Activated naive CD8-positive, alpha-beta T cell treated with anti-CD3 and anti-CD28 coated beads, Interleukin-2, amount 10 ng/mL, durations not matched to agents 7 days and 5 days (primary cell): ENCODE measurements at regions of chr14 and their contacts with region 1.

Region 1: GRCh38 chr14:100192672-100193416 is 33.4 kb upstream of the DEGS2 start:
- DNase-seq: peak; percentile 99
- ATAC-seq: peak; percentile 100
- H3K4me3 Mint-ChIP-seq: peak overlapping the region; percentile 75
- H3K27ac Mint-ChIP-seq: peak overlapping the region; percentile 93
- H3K4me1 Mint-ChIP-seq: peaks cover 8% of the 10 kb centered on the region
- H3K27me3 Mint-ChIP-seq: no peaks in the 10 kb centered on the region

Region 2: DNA sequence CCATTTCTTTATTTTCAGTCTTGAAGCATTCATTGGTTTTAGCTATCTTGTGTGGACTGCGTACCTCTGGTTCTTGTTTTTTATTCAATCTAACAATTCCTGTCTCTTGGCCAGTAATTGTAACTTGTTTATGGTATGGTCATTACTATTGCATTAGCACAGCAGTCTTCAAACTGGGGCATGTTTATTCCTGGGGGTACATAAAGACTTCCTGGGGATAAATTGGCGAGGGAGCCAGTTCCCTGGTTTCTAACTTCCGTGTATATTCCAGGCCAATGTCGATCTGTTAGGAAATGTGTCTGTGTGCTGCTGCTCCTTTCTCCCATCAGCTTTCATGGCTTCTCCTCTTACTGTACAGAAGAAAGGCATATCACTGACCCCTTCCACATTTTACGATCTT is 141.3 kb before region 1 on chr14:
- POLR2A ChIA-PET with region 1: no interaction called
- DNase-seq: no peak
- ATAC-seq: no peak
- H3K4me3 Mint-ChIP-seq: no peak overlapping the region
- H3K27ac Mint-ChIP-seq: peak overlapping the region; percentile 26
- H3K4me1 Mint-ChIP-seq: peaks cover 37% of the 10 kb centered on the region
- H3K27me3 Mint-ChIP-seq: no peaks in the 10 kb centered on the region

Region 3: DNA sequence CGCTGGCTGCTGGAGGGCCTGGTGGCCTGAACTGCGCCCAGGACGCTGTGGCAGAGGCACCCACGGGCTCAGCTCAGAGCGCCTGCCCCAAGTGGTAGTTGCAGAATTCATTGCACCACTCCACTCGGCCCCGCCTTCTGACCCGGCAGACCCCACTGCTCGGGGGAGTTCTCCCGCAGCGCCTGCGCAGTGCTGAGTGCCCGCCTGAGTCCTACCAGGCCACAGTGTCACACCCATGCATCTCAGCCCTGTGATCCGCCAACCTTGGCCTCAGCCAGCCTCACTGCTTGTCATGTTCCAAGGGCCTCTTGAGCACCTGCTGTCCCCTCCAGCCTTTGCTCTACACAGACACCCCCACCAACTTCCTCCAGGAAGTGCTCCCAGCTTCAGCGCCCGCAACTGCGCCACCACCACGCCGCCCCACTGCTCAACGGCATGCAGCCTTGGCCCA is 45.6 kb before region 1 on chr14:
- POLR2A ChIA-PET with region 1: interaction called, 11 read pairs
- DNase-seq: peak; percentile 78
- ATAC-seq: peak; percentile 65
- H3K4me3 Mint-ChIP-seq: peak overlapping the region; percentile 4
- H3K27ac Mint-ChIP-seq: peak overlapping the region; percentile 77
- H3K4me1 Mint-ChIP-seq: peaks cover 22% of the 10 kb centered on the region
- H3K27me3 Mint-ChIP-seq: no peaks in the 10 kb centered on the region

Region 4: DNA sequence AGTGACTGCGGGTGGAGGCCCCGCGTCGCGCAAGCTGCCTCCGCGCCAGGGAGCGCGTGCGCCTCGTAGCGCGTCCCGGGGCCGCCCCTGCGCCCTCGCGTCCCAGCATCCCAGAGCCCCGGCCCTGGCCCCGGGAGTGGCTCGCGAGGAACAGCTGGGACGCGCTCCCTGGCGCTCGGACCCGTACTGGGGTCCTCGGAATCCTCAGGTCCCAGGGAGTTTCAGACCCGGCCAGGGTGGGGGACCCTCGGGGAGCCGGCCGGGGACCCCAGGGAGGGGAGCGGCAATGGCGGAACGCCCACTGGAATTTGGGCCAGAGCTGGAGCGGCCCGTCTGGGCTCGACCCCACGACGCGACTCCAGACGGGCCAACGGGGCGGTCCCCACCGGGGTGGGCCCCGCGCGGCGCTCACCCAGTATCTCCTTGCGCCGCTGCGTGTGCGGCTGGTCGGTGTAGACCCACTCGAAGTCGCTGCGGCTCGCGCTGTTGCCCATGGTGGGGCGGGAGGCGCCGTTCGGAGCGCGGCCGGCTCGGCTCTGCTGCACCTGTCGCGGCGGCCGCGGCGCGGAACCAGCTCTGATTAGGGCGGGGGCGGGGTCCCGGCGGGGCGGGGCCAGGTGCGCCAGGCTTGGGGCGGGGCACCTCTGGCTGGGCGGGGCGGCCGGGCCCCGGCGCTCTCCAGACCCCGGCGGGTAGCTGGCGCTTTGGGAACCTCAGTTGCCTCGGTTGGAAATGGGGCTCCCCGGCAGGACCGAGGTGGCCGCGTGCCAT is 33.6 kb before region 1 on chr14 and contains the start of gene DEGS2:
- POLR2A ChIA-PET with region 1: no interaction called
- DNase-seq: peak; percentile 73
- ATAC-seq: peak; percentile 78
- H3K4me3 Mint-ChIP-seq: peak within 1 kb of the TSS; percentile 73
- H3K27ac Mint-ChIP-seq: no peak within 1 kb of the TSS
- H3K4me1 Mint-ChIP-seq: peaks cover 2% of the 10 kb centered on the region
- H3K27me3 Mint-ChIP-seq: peaks cover 33% of the 10 kb centered on the region
- total RNA-seq, gene DEGS2: 0.14 to 0.28 TPM

Region 5: GRCh38 chr14:100173353-100173752 is 19.5 kb before region 1 on chr14:
- POLR2A ChIA-PET with region 1: no interaction called
- DNase-seq: no peak
- ATAC-seq: no peak
- H3K4me3 Mint-ChIP-seq: no peak overlapping the region
- H3K27ac Mint-ChIP-seq: no peak overlapping the region
- H3K4me1 Mint-ChIP-seq: peaks cover 1% of the 10 kb centered on the region
- H3K27me3 Mint-ChIP-seq: peaks cover 14% of the 10 kb centered on the region

Region 6: DNA sequence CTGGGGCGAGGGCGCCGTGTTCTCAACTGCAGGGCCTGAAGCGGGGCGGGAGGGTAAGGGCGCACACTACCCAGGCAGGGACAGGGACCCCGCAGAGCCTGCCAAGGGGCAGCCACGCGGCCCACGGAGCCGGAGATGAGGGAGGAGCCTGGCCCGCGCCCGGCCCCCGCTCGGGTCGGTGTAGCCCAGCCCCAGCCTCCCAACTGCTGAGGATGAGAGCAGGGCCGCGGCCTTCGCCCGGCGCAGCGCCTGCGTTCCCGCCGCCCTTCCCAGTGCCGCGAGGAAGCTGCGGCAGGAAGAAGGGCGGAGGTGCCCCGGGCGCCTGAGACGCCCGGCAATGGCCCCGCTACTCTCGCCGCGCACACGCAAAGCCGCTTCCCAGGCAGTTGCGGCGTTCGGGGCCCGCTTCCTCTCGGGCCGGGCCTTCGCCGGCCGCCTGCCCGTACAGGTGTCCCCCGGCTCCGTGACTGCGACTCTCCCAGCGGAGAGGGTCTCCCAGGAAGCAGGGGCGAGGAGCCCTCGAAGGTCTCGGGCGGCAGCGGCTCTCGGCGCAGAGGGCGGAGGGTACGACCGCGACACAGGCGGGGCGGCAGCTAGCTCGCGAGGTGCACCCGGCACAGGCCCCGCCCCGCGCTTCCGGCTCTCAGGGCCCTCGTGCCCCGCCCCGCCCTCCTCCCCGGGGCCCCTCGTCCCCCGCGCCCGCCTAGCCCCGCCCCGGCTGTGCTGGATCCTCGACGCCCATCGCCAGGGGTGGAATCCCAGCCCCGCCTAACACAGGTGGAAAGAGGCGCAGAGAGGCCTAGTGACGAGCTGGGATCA is 21.3 kb after region 1 on chr14:
- POLR2A ChIA-PET with region 1: interaction called, 12 read pairs
- DNase-seq: peak; percentile 97
- ATAC-seq: peak; percentile 94
- H3K4me3 Mint-ChIP-seq: peak overlapping the region; percentile 85
- H3K27ac Mint-ChIP-seq: peak overlapping the region; percentile 94
- H3K4me1 Mint-ChIP-seq: peaks cover 28% of the 10 kb centered on the region
- H3K27me3 Mint-ChIP-seq: no peaks in the 10 kb centered on the region

Region 7: GRCh38 chr14:100221533-100222223 is 28.8 kb after region 1 on chr14:
- POLR2A ChIA-PET with region 1: interaction called, 31 read pairs
- DNase-seq: peak; percentile 67
- ATAC-seq: peak; percentile 91
- H3K4me3 Mint-ChIP-seq: no peak overlapping the region
- H3K27ac Mint-ChIP-seq: no peak overlapping the region
- H3K4me1 Mint-ChIP-seq: peaks cover 33% of the 10 kb centered on the region
- H3K27me3 Mint-ChIP-seq: no peaks in the 10 kb centered on the region

Region 8: DNA sequence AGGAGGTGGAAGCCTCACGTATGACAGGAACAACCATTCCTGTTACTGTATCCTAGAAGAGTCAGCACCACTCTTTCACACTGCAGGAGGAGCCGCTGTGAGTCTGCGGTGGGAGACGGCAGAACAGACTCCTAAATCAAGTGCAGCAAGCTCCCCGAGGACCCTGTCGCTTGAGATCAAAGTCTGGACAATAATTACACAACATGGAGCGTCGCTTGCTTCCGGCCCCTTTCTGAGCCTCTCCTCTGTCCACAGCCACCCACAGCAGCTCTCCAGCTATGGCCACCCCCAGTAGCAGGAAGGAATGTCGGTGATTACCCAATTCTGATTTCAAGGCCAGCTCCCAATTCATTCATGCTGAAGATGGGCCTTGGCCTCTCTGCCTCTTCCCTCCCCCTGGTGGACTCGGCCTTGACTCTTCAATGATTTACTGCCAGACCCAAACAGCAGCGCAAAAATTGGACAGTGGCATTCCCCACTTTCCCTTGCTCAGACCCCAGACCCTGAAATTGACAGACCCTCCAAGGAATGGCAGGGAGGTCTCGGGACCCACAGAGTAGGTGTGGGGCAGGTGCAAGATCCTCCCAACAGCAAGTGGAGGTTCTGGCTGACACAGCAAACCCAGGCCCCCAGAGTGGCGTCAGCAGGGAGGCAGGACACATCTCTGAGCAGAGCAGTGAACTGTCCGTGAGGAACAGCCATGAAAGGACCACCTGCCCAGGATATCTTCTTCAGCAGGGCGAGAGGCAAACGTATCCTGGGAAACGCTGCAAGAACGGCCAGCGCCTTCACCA is 1095.8 kb after region 1 on chr14:
- POLR2A ChIA-PET with region 1: no interaction called
- DNase-seq: no peak
- ATAC-seq: no peak
- H3K4me3 Mint-ChIP-seq: no peak overlapping the region
- H3K27ac Mint-ChIP-seq: no peak overlapping the region
- H3K4me1 Mint-ChIP-seq: no peaks in the 10 kb centered on the region
- H3K27me3 Mint-ChIP-seq: peaks cover 16% of the 10 kb centered on the region